B cell (primary cell): ENCODE measurements at regions of chr5 and their contacts with region 1.

Region 1: GRCh38 chr5:43066799-43067741 is 27.0 kb upstream of the ANXA2R start:
- DNase-seq: peak; percentile 96
- ATAC-seq: peak; percentile 46
- H3K4me3 ChIP-seq: peak overlapping the region; percentile 87 to 100 (median 90)
- H3K4me3 Mint-ChIP-seq: peak overlapping the region; percentile 99
- H3K27ac ChIP-seq: peak overlapping the region; percentile 98 to 99
- H3K27ac Mint-ChIP-seq: peak overlapping the region; percentile 100
- H3K4me1 ChIP-seq: peaks cover 19 to 29% of the 10 kb centered on the region in 2 donors
- H3K4me1 Mint-ChIP-seq: peaks cover 37% of the 10 kb centered on the region
- H3K27me3 ChIP-seq: no peaks in the 10 kb centered on the region
- H3K27me3 Mint-ChIP-seq: no peaks in the 10 kb centered on the region
- CTCF ChIP-seq: no peak

Region 2: DNA sequence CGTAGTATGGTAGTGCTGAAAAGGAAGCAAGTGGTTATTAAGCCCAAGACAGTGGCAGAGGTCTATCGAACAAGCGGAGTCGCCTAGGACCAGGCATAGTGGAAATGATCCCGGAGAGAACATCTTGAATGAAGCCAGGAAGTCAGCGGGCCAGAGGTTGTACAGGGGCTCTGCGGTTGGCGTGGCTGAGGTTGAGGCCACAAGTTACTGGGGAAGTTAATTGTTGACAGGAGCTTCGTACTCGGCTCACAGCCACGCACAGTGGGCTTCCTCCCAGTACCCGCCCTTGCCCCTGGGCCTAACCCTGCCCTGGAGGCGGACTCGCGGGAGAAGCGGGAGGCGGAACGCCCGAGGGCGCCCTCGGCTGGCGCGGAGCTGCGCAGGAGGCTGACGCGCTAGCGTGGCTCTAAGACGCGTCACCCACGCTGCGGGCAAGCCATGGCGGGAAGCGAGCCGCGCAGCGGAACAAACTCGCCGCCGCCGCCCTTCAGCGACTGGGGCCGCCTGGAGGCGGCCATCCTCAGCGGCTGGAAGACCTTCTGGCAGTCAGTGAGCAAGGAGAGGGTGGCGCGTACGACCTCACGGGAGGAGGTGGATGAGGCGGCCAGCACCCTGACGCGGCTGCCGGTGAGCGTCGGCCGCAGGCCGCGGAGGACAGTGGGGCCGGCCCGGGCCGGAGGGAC is 1142.1 kb before region 1 on chr5 and contains the start of gene FBXO4:
- CTCF ChIA-PET with region 1: no interaction called
- POLR2A ChIA-PET with region 1: no interaction called
- intact Hi-C with region 1: loop called (anchors 10 kb)
- DNase-seq: peak; percentile 95
- ATAC-seq: peak; percentile 93
- H3K4me3 ChIP-seq: peak within 1 kb of the TSS; percentile 72 to 87 (median 77)
- H3K4me3 Mint-ChIP-seq: peak within 1 kb of the TSS; percentile 86
- H3K27ac ChIP-seq: peak within 1 kb of the TSS; percentile 96 to 98
- H3K27ac Mint-ChIP-seq: peak within 1 kb of the TSS; percentile 95
- H3K4me1 ChIP-seq: peaks cover 13 to 17% of the 10 kb centered on the region in 2 donors
- H3K4me1 Mint-ChIP-seq: peaks cover 27% of the 10 kb centered on the region
- H3K27me3 ChIP-seq: no peaks in the 10 kb centered on the region
- H3K27me3 Mint-ChIP-seq: no peaks in the 10 kb centered on the region
- CTCF ChIP-seq: peak; percentile 67
- total RNA-seq, gene FBXO4: 17.1 and 17.9 TPM in 2 replicates

Region 3: GRCh38 chr5:42950440-42951292 is 116.4 kb before region 1 on chr5:
- CTCF ChIA-PET with region 1: interaction called, 24 read pairs
- POLR2A ChIA-PET with region 1: interaction called, 24 read pairs
- intact Hi-C with region 1: loop called (anchors 1 kb)
- DNase-seq: peak; percentile 85
- ATAC-seq: peak; percentile 44
- H3K4me3 ChIP-seq: peak overlapping the region; percentile 67 to 92 (median 85)
- H3K4me3 Mint-ChIP-seq: peak overlapping the region; percentile 99
- H3K27ac ChIP-seq: peak overlapping the region; percentile 93 to 97
- H3K27ac Mint-ChIP-seq: peak overlapping the region; percentile 100
- H3K4me1 ChIP-seq: peaks cover 13 to 33% of the 10 kb centered on the region in 2 donors
- H3K4me1 Mint-ChIP-seq: peaks cover 33% of the 10 kb centered on the region
- H3K27me3 ChIP-seq: no peaks in the 10 kb centered on the region
- H3K27me3 Mint-ChIP-seq: no peaks in the 10 kb centered on the region
- CTCF ChIP-seq: no peak

Region 4: GRCh38 chr5:43008369-43009153 is 58.5 kb before region 1 on chr5:
- CTCF ChIA-PET with region 1: interaction called, 35 read pairs
- POLR2A ChIA-PET with region 1: interaction called, 64 read pairs
- intact Hi-C with region 1: loop called (anchors 1 kb)
- DNase-seq: peak; percentile 95
- ATAC-seq: peak; percentile 58
- H3K4me3 ChIP-seq: peak overlapping the region; percentile 69 to 99 (median 76)
- H3K4me3 Mint-ChIP-seq: peak overlapping the region; percentile 89
- H3K27ac ChIP-seq: peak overlapping the region; percentile 83 to 97
- H3K27ac Mint-ChIP-seq: peak overlapping the region; percentile 98
- H3K4me1 ChIP-seq: peaks cover 20 to 38% of the 10 kb centered on the region in 2 donors
- H3K4me1 Mint-ChIP-seq: peaks cover 31% of the 10 kb centered on the region
- H3K27me3 ChIP-seq: no peaks in the 10 kb centered on the region
- H3K27me3 Mint-ChIP-seq: no peaks in the 10 kb centered on the region
- CTCF ChIP-seq: peak; percentile 36

Region 5: DNA sequence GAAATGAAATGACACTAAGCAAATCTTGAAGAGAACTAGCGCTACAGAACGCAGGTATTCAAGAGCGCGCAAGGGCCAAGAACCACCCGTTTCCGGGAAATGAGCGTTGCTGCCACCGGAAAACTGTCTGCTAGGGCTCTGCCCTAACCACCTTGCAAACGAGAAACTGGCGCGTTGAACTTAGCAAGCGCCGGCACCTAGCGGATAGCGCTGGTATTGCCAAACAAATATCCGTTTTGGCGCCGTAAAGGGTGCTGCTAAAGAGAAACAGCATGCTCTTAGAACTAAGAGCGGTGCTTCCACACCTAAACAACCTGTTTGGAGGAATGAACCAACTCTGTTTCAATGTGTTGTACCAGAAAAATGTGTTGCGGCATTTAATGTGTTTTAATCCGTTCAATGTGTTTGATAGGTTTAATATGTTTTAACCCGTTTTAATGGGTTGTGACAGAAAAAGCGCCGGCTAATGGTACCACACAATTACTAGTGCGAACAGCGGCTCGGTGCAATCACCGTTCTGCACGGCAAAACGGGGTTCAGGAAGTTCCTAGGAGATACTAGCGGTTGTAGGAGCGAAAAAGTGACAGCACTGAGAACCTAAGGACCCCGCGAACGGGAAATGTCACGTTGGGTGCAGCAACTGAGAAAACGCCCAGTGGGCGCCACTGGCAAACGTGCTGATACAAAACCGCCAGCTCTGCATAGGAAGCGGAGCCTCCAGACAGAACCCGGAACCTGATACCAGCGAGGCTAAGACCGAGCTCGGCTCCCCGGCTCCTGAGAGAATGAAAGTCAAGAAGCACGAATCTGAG is 26.6 kb before region 1 on chr5 and contains the start of gene ANXA2R:
- CTCF ChIA-PET with region 1: interaction called, 68 read pairs
- POLR2A ChIA-PET with region 1: interaction called, 136 read pairs
- intact Hi-C with region 1: loop called (anchors 1 kb)
- DNase-seq: peak; percentile 97
- ATAC-seq: peak; percentile 60
- H3K4me3 ChIP-seq: peak within 1 kb of the TSS; percentile 62 to 95 (median 81)
- H3K4me3 Mint-ChIP-seq: peak within 1 kb of the TSS; percentile 97
- H3K27ac ChIP-seq: peak within 1 kb of the TSS; percentile 98 to 99
- H3K27ac Mint-ChIP-seq: peak within 1 kb of the TSS; percentile 98
- H3K4me1 ChIP-seq: peaks cover 25 to 44% of the 10 kb centered on the region in 2 donors
- H3K4me1 Mint-ChIP-seq: peaks cover 39% of the 10 kb centered on the region
- H3K27me3 ChIP-seq: no peaks in the 10 kb centered on the region
- H3K27me3 Mint-ChIP-seq: no peaks in the 10 kb centered on the region
- CTCF ChIP-seq: peak; percentile 86
- total RNA-seq, gene ANXA2R: 19.3 and 20.0 TPM in 2 replicates

Region 6: GRCh38 chr5:43556857-43557542 is 489.9 kb after region 1 on chr5 and contains the start of gene PAIP1:
- CTCF ChIA-PET with region 1: no interaction called
- POLR2A ChIA-PET with region 1: no interaction called
- intact Hi-C with region 1: loop called (anchors 2 kb)
- DNase-seq: peak; percentile 95
- ATAC-seq: peak; percentile 73
- H3K4me3 ChIP-seq: peak within 1 kb of the TSS; percentile 66 to 83 (median 79)
- H3K4me3 Mint-ChIP-seq: peak within 1 kb of the TSS; percentile 93
- H3K27ac ChIP-seq: peak within 1 kb of the TSS; percentile 81 to 91
- H3K27ac Mint-ChIP-seq: peak within 1 kb of the TSS; percentile 92
- H3K4me1 ChIP-seq: peaks cover 14 to 31% of the 10 kb centered on the region in 2 donors
- H3K4me1 Mint-ChIP-seq: peaks cover 16% of the 10 kb centered on the region
- H3K27me3 ChIP-seq: no peaks in the 10 kb centered on the region
- H3K27me3 Mint-ChIP-seq: no peaks in the 10 kb centered on the region
- CTCF ChIP-seq: peak; percentile 87
- total RNA-seq, gene PAIP1: 31.8 and 35.9 TPM in 2 replicates